Esophagus squamous epithelium (tissue), 5 donors: ENCODE measurements at regions of chr15 and their contacts with region 1.

Region 1: DNA sequence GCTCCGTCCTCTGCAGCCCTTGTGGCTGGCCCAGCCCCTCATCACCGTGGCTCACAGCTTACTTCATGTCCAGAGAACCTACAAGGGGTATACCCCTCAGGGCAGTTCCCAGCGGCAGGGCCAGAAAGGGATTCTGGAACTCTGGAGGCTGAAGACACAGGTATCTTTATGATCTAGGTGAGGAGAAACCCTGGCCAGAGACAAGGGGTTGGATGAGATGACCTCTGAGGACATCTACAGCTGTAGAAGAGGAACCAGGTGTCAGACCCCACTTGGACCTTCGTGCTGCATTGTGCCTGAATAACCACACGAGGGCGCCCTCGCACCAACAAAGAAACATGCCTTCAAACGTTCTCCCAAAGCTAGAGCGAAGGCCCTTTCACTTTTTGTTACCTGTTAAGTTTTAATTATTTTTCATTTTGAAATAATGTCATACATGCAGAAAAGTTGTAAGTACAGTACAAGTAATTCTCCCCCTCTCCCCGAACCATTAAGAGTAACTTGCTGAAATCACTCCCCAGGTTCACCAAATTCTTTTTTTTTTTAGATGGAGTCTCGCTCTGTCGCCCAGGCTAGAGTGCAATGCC is 118.7 kb upstream of the SMAD3 start:
- DNase-seq: peak; percentile 3
- H3K4me3 ChIP-seq: no peak overlapping the region
- H3K27ac ChIP-seq: no peak overlapping the region
- H3K4me1 ChIP-seq: peaks cover 0 to 32% (median 9%) of the 10 kb centered on the region in 3 donors
- H3K27me3 ChIP-seq: no peaks in the 10 kb centered on the region
- CTCF ChIP-seq: peak; percentile 89 to 95 (median 94)
- POLR2A ChIP-seq: no peak

Region 2: DNA sequence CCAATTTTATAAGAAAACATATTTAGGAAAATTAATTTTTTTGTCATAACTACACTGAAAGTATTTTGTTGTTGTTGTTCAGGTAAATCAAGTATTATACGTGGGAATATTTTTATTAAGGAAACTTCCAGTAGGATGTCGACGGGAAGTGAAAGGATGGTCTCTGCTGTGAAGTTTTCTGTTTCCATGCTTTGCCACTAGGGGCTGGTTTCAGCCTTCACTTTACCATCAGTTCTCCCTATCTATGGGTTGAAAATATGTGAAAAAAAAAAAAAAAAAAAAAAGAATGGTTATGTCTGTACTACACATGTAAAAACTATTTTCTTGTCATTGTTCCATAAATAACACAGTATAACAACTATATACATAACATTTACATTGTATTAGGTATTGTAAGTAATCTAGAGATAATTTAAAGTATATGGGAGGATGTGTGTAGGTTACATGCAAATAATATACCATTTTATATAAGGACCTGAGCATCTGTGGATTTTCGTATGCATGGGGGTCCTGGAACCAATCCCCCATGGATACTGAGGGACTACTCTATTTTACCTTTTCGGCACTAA is 107.9 kb before region 1 on chr15:
- intact Hi-C with region 1: no loop called
- DNase-seq: no peak
- H3K4me3 ChIP-seq: no peak overlapping the region
- H3K27ac ChIP-seq: no peak overlapping the region
- H3K4me1 ChIP-seq: peaks cover 15 to 29% (median 17%) of the 10 kb centered on the region in 3 donors
- H3K27me3 ChIP-seq: peaks cover 0 to 23% (median 0%) of the 10 kb centered on the region in 4 donors
- CTCF ChIP-seq: peak in 4 of 6 experiments; percentile 15 to 53 (median 47)
- POLR2A ChIP-seq: no peak

Region 3: GRCh38 chr15:67120839-67121643 is 174.4 kb after region 1 on chr15:
- intact Hi-C with region 1: no loop called
- DNase-seq: peak; percentile 44
- H3K4me3 ChIP-seq: peak overlapping the region in 3 of 4 donors; percentile 27 to 56 (median 29)
- H3K27ac ChIP-seq: peak overlapping the region; percentile 90 to 98 (median 92)
- H3K4me1 ChIP-seq: peaks cover 75 to 100% (median 90%) of the 10 kb centered on the region in 3 donors
- H3K27me3 ChIP-seq: no peaks in the 10 kb centered on the region
- CTCF ChIP-seq: no peak
- POLR2A ChIP-seq: peak in 1 of 4 donors; percentile 42

Region 4: GRCh38 chr15:67307156-67307555 is 360.5 kb after region 1 on chr15:
- intact Hi-C with region 1: loop called (anchors 5 kb)
- DNase-seq: no peak
- H3K4me3 ChIP-seq: no peak overlapping the region
- H3K27ac ChIP-seq: no peak overlapping the region
- H3K4me1 ChIP-seq: peaks cover 0 to 19% (median 0%) of the 10 kb centered on the region in 3 donors
- H3K27me3 ChIP-seq: no peaks in the 10 kb centered on the region
- CTCF ChIP-seq: no peak
- POLR2A ChIP-seq: no peak

Region 5: DNA sequence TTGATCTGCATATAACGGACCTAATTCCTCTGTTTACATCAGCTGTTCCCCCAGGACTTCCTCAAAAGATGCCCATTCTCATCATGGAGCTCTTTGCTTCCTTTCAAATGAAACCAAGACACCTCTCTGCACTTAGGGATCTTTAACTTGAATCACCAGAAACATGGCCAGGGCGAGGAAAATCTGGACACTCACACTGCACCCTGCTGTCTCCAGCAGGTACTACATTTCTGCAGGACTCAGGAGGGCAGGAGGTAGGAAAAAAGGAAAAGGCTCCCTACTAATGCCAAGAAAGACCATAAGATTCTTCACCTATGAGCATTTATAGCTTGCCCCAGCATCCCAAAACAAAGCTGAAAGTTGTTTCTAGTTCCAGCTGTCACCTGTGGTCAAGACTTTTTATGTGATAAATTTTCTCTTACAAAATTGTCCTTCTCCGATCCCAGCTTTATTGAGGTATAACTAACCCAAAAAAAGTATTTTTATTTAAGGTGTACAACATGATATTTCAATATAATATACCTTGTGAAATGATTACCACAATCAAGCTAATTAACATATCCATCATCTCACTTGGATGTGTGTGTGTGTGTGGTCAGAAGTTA is 486.9 kb after region 1 on chr15:
- intact Hi-C with region 1: loop called (anchors 10 kb)
- DNase-seq: no peak
- H3K4me3 ChIP-seq: no peak overlapping the region
- H3K27ac ChIP-seq: no peak overlapping the region
- H3K4me1 ChIP-seq: peaks cover 5 to 16% (median 7%) of the 10 kb centered on the region in 3 donors
- H3K27me3 ChIP-seq: no peaks in the 10 kb centered on the region
- CTCF ChIP-seq: peak; percentile 21 to 77 (median 68)
- POLR2A ChIP-seq: no peak

Region 6: DNA sequence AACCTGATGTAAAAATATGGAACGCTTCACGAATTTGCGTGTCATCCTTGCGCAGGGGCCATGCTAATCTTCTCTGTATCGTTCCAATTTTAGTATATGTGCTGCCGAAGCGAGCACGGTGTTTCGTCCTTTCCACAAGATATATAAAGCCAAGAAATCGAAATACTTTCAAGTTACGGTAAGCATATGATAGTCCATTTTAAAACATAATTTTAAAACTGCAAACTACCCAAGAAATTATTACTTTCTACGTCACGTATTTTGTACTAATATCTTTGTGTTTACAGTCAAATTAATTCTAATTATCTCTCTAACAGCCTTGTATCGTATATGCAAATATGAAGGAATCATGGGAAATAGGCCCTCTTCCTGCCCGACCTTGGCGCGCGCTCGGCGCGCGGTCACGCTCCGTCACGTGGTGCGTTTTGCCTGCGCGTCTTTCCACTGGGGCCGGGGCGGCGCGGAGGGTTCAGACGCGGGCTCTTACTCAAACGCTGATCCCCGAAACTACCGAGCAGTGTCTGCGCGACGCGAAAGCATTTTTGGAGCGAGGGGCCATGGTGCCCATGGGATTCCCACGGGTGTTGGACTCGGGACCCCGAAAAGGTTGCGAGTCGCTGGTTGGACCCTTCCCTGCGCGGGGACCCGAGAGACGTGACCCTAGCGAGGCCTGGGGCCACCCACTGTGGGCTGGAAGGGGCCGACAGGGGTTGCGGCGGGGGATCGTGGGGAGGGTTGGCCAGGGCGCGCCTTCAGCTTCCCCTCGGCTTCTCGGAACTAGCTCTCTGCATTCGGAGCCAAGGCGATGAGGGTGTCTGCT is 893.5 kb after region 1 on chr15 and contains the start of gene RNU6-1:
- intact Hi-C with region 1: loop called (anchors 10 kb)
- DNase-seq: peak; percentile 71
- H3K4me3 ChIP-seq: peak within 1 kb of the TSS; percentile 71 to 93 (median 87)
- H3K27ac ChIP-seq: peak within 1 kb of the TSS; percentile 92 to 98 (median 96)
- H3K4me1 ChIP-seq: peaks cover 17 to 46% (median 27%) of the 10 kb centered on the region in 3 donors
- H3K27me3 ChIP-seq: peaks cover 0 to 17% (median 9%) of the 10 kb centered on the region in 4 donors
- CTCF ChIP-seq: peak in 1 of 6 experiments; percentile 21
- POLR2A ChIP-seq: peak in 3 of 4 donors; percentile 20 to 86 (median 80)
- total RNA-seq, gene RNU6-1: not detected